BJ (cell line): ENCODE measurements at regions of chr10 and their contacts with region 1.

Region 1: DNA sequence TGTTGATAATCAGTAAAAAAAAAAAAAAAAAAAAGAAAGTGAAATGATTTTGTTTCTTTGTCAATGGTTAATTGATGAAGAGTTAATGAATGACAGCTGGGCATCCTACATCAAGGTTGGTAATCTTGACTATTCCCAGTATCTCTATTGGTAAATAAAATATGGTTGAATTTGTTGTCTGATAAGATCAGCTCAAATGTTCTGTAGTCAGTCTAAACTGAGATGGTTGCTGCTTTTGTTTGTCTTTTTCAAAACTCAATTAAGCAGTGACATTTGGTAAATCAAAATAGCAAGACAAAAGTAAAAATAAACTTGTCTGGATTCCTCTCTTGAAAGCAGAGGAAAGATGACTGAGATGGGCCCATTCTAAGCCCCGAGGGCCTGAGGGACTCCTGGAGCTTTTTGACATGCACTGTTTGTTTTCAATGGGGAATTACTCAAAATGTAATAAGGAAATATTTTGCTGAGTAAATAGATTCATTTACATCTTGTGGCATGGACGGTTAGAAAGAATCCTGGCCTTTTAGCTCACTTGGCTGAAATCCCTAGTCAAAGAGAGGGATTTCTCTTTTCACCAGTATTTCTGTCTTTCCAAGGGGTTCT is 108.2 kb downstream of the MKX start:
- DNase-seq: no peak
- H3K4me3 ChIP-seq: no peak overlapping the region
- H3K27me3 ChIP-seq: no peaks in the 10 kb centered on the region
- CTCF ChIP-seq: no peak

Region 2: GRCh38 chr10:27625452-27626211 is 11.8 kb before region 1 on chr10:
- CTCF ChIA-PET with region 1: interaction called, 15 read pairs
- POLR2A ChIA-PET with region 1: no interaction called
- DNase-seq: no peak
- H3K4me3 ChIP-seq: no peak overlapping the region
- H3K27me3 ChIP-seq: no peaks in the 10 kb centered on the region
- CTCF ChIP-seq: no peak